Activated naive CD4-positive, alpha-beta T cell treated with anti-CD3 and anti-CD28 coated beads for 36 hours (primary cell): ENCODE measurements at regions of chr16 and their contacts with region 1.

Region 1: GRCh38 chr16:3690470-3690928 is 26.8 kb downstream of the TRAP1 start:
- DNase-seq: peak; percentile 93
- H3K4me3 Mint-ChIP-seq: no peak overlapping the region
- H3K27ac Mint-ChIP-seq: no peak overlapping the region
- H3K4me1 Mint-ChIP-seq: peaks cover 9% of the 10 kb centered on the region
- H3K27me3 Mint-ChIP-seq: no peaks in the 10 kb centered on the region

Region 2: DNA sequence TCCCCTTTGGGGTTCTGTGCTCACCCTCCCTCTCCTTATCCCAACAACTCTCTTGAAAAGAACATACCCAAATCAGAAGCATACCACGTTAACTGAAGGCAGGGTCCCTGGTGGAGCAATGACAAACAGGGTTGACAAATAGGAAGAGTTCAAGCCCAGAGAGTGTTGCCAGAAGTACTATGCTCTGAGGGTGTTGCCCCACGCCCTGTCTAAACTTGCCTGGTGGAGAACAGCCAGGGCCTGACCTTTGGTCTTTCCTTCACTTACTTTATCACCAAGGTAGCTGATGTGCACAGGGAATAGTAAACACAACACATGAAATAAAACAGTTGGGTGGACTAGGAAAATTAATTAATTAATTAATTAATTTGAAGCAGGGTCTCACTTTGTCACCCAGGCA is 361.9 kb before region 1 on chr16:
- CTCF ChIA-PET with region 1: no interaction called
- intact Hi-C with region 1: no loop called
- DNase-seq: no peak
- H3K4me3 Mint-ChIP-seq: no peak overlapping the region
- H3K27ac Mint-ChIP-seq: no peak overlapping the region
- H3K4me1 Mint-ChIP-seq: no peaks in the 10 kb centered on the region
- H3K27me3 Mint-ChIP-seq: no peaks in the 10 kb centered on the region

Region 3: GRCh38 chr16:3637371-3637923 is 53.1 kb before region 1 on chr16:
- CTCF ChIA-PET with region 1: no interaction called
- intact Hi-C with region 1: no loop called
- DNase-seq: peak; percentile 64
- H3K4me3 Mint-ChIP-seq: peak overlapping the region; percentile 16
- H3K27ac Mint-ChIP-seq: peak overlapping the region; percentile 84
- H3K4me1 Mint-ChIP-seq: peaks cover 25% of the 10 kb centered on the region
- H3K27me3 Mint-ChIP-seq: no peaks in the 10 kb centered on the region

Region 4: DNA sequence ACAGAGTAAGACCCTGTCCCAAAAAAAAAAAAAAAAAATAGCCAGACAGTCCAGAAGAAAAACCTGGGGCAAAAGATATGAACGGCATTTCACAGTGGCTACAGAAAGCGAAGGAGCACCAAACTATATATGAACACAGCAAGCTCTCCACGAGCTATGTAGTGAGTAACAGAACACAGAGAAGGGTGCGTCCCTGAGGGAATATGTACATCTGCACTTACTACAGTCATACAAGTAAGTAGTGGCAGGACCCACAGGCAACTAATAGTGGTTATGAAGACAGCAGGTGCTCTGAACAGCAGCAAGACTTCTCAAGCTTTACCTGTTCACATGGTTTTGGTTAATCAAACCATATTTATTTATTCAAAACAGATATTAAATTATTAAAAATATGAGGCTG is 11.0 kb after region 1 on chr16:
- CTCF ChIA-PET with region 1: interaction called, 15 read pairs
- intact Hi-C with region 1: no loop called
- DNase-seq: no peak
- H3K4me3 Mint-ChIP-seq: no peak overlapping the region
- H3K27ac Mint-ChIP-seq: no peak overlapping the region
- H3K4me1 Mint-ChIP-seq: peaks cover 8% of the 10 kb centered on the region
- H3K27me3 Mint-ChIP-seq: no peaks in the 10 kb centered on the region